ENCODE measurements at regions of chr12 and their contacts with region 1.

Region 1: DNA sequence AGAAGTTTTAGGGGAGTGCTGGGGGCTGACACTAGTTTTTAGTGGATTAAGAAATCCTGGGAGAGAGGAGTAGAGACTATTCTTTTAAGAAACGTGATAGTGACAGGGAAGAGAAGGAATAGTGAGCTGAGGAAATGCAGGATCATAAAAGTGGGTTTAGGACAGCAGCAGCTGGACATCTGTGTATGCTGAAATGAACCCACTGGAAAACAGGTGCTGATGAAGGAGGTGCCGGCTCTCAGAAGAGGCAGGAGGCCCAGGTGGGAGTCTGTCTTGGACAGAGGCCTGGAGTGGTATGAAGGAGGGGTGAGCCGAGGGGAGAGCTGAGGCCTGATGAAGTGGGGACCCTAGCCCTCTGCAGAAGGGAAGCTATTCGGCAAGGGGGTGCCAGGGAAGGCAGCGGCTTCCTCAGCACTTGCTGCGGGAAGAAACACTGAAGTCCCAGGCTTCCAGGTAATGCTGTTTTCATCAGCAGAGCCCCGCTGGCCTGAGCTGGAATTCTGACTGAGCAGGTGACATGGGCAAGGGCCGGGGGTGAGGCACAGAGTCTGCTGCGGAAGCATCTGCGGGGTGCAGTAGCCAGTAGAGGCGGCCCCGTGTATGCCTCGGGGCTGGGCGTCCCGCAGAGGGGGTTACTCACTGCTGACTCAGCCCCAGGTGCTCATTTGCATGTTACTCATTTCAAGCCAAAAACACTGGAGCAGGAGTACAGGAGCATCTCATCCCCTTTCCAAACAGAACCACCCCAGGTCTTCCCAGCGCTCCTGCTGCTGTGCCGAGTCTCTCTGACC is 89.7 kb downstream of the TMCC3 start:
- DNase-seq: no peak
- ATAC-seq: no peak
- H3K4me3 ChIP-seq: no peak overlapping the region
- H3K4me3 Mint-ChIP-seq: no peak overlapping the region
- H3K27ac ChIP-seq: no peak overlapping the region
- H3K27ac Mint-ChIP-seq: no peak overlapping the region
- H3K4me1 ChIP-seq: no peaks in the 10 kb centered on the region
- H3K4me1 Mint-ChIP-seq: no peaks in the 10 kb centered on the region
- H3K27me3 ChIP-seq: peaks cover 0 to 5% of the 10 kb centered on the region in 2 experiments
- H3K27me3 Mint-ChIP-seq: peaks cover 14 to 21% of the 10 kb centered on the region in 2 donors

Region 2: DNA sequence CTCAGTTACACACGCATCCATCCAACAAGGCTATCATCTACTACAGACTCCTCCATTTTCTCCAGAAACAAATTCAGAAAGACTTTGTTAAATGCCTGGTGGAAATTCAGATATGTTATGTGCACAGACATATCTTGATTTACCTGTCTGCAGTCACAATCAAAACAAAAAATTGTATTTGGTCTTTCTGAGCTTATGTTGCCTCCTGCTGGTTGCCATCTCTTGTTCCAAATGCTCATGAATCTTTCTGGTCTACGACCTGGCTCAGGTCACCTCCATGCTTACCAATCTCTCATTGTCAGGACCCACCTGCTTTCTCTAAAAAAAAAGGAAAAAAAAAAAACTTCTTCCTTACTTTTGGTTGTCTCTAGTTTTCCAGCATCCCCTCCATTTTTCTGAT is 581.4 kb before region 1 on chr12:
- CTCF ChIA-PET with region 1: interaction called in 1 of 2 experiments, 14 read pairs
- POLR2A ChIA-PET with region 1: no interaction called
- DNase-seq: peak in 7 of 35 experiments; percentile 1 to 54 (median 10)
- ATAC-seq: no peak
- H3K4me3 ChIP-seq: no peak overlapping the region
- H3K4me3 Mint-ChIP-seq: no peak overlapping the region
- H3K27ac ChIP-seq: no peak overlapping the region
- H3K27ac Mint-ChIP-seq: no peak overlapping the region
- H3K4me1 ChIP-seq: peaks cover 2 to 17% of the 10 kb centered on the region in 2 experiments
- H3K4me1 Mint-ChIP-seq: peaks cover 14 to 40% (median 27%) of the 10 kb centered on the region in 3 donors
- H3K27me3 ChIP-seq: no peaks in the 10 kb centered on the region
- H3K27me3 Mint-ChIP-seq: no peaks in the 10 kb centered on the region

Region 3: GRCh38 chr12:94386422-94386821 is 174.2 kb before region 1 on chr12:
- CTCF ChIA-PET with region 1: no interaction called
- POLR2A ChIA-PET with region 1: no interaction called
- DNase-seq: no peak
- ATAC-seq: no peak
- H3K4me3 ChIP-seq: no peak overlapping the region
- H3K4me3 Mint-ChIP-seq: no peak overlapping the region
- H3K27ac ChIP-seq: no peak overlapping the region
- H3K27ac Mint-ChIP-seq: no peak overlapping the region
- H3K4me1 ChIP-seq: no peaks in the 10 kb centered on the region
- H3K4me1 Mint-ChIP-seq: no peaks in the 10 kb centered on the region
- H3K27me3 ChIP-seq: no peaks in the 10 kb centered on the region
- H3K27me3 Mint-ChIP-seq: no peaks in the 10 kb centered on the region

Region 4: GRCh38 chr12:94397401-94397800 is 163.2 kb before region 1 on chr12:
- CTCF ChIA-PET with region 1: no interaction called
- POLR2A ChIA-PET with region 1: interaction called in 1 of 2 experiments, 10 read pairs
- DNase-seq: no peak
- ATAC-seq: no peak
- H3K4me3 ChIP-seq: no peak overlapping the region
- H3K4me3 Mint-ChIP-seq: no peak overlapping the region
- H3K27ac ChIP-seq: no peak overlapping the region
- H3K27ac Mint-ChIP-seq: no peak overlapping the region
- H3K4me1 ChIP-seq: no peaks in the 10 kb centered on the region
- H3K4me1 Mint-ChIP-seq: no peaks in the 10 kb centered on the region
- H3K27me3 ChIP-seq: no peaks in the 10 kb centered on the region
- H3K27me3 Mint-ChIP-seq: no peaks in the 10 kb centered on the region

Region 5: GRCh38 chr12:94545935-94546771 is 14.5 kb before region 1 on chr12:
- CTCF ChIA-PET with region 1: no interaction called
- POLR2A ChIA-PET with region 1: no interaction called
- DNase-seq: peak in 2 of 35 experiments; percentile 5 to 21
- ATAC-seq: no peak
- H3K4me3 ChIP-seq: no peak overlapping the region
- H3K4me3 Mint-ChIP-seq: no peak overlapping the region
- H3K27ac ChIP-seq: no peak overlapping the region
- H3K27ac Mint-ChIP-seq: no peak overlapping the region
- H3K4me1 ChIP-seq: no peaks in the 10 kb centered on the region
- H3K4me1 Mint-ChIP-seq: no peaks in the 10 kb centered on the region
- H3K27me3 ChIP-seq: no peaks in the 10 kb centered on the region
- H3K27me3 Mint-ChIP-seq: no peaks in the 10 kb centered on the region

Region 6: DNA sequence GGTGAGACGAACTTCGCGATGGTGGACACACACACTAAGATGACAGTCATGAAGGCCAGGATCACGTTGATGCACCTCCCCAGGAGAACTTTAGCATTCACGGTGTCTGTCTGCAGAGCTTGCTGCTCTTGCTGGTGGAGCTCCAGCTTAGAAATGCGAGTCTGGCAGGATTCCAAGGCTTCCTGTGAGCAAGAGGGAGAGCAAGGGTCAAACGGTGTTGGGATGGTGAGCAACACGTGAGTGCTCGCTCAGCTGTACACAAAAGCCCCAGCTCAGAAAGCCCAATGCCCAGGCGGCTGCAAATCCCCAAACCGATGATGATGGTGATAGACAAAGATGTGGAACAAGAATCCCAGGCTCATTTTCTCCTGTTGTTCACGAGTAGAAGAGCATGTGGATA is 10.9 kb after region 1 on chr12:
- CTCF ChIA-PET with region 1: no interaction called
- POLR2A ChIA-PET with region 1: no interaction called
- DNase-seq: no peak
- ATAC-seq: no peak
- H3K4me3 ChIP-seq: no peak overlapping the region
- H3K4me3 Mint-ChIP-seq: no peak overlapping the region
- H3K27ac ChIP-seq: no peak overlapping the region
- H3K27ac Mint-ChIP-seq: no peak overlapping the region
- H3K4me1 ChIP-seq: no peaks in the 10 kb centered on the region
- H3K4me1 Mint-ChIP-seq: no peaks in the 10 kb centered on the region
- H3K27me3 ChIP-seq: peaks cover 0 to 2% of the 10 kb centered on the region in 2 experiments
- H3K27me3 Mint-ChIP-seq: peaks cover 7 to 20% of the 10 kb centered on the region in 2 donors

Region 7: DNA sequence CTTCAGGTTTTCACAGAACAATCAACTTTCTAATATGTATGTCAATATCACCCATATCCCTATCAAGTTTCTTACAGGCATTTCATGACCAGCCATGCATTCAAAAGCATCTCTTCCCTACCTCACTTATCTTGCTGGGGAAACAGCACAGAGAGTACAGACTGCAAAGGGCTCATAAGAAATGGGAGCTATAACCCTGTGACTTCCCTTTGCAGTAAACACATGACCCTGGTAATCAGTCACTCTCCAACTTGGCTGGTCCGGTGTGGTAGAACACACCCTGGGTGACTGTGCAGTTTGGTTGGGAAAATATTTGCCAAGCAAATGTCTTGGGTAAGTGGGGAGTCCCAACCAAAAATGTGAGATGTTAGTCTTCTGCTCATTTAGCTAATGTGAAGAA is 139.2 kb after region 1 on chr12:
- CTCF ChIA-PET with region 1: no interaction called
- POLR2A ChIA-PET with region 1: interaction called in 1 of 2 experiments, 11 read pairs
- DNase-seq: no peak
- ATAC-seq: no peak
- H3K4me3 ChIP-seq: no peak overlapping the region
- H3K4me3 Mint-ChIP-seq: no peak overlapping the region
- H3K27ac ChIP-seq: no peak overlapping the region
- H3K27ac Mint-ChIP-seq: no peak overlapping the region
- H3K4me1 ChIP-seq: no peaks in the 10 kb centered on the region
- H3K4me1 Mint-ChIP-seq: peaks cover 0 to 3% (median 0%) of the 10 kb centered on the region in 3 donors
- H3K27me3 ChIP-seq: no peaks in the 10 kb centered on the region
- H3K27me3 Mint-ChIP-seq: peaks cover 6 to 12% of the 10 kb centered on the region in 2 donors

Region 8: DNA sequence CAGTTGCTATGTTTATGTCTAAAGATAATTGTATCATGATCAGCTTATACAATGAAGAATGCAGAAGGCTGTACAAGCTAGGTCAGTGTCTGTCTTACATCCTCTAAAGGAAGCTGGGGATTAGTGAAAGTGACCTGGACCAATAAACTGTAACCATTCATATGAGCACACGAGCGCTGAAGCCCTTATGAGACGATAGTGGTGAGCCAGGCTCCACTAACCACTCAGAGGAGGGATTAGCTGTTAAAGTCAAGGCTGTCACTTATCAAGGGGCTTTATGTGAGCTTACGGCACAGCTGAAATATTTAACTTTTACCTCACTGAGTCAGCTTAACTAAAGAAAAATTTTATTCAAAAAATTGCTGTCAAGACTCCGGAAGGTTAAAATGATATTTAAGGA is 412.6 kb after region 1 on chr12:
- CTCF ChIA-PET with region 1: no interaction called
- POLR2A ChIA-PET with region 1: no interaction called
- DNase-seq: no peak
- ATAC-seq: no peak
- H3K4me3 ChIP-seq: no peak overlapping the region
- H3K4me3 Mint-ChIP-seq: no peak overlapping the region
- H3K27ac ChIP-seq: no peak overlapping the region
- H3K27ac Mint-ChIP-seq: no peak overlapping the region
- H3K4me1 ChIP-seq: peaks cover 0 to 6% of the 10 kb centered on the region in 2 experiments
- H3K4me1 Mint-ChIP-seq: peaks cover 23 to 42% (median 24%) of the 10 kb centered on the region in 3 donors
- H3K27me3 ChIP-seq: no peaks in the 10 kb centered on the region
- H3K27me3 Mint-ChIP-seq: no peaks in the 10 kb centered on the region

Measured in T-cell (primary cell).